Activated CD8-positive, alpha-beta T cell treated with anti-CD3 and anti-CD28 coated beads, Interleukin-2, amount 10 ng/mL, durations not matched to agents 7 days and 5 days (primary cell): ENCODE measurements at regions of chr11 and their contacts with region 1.

Region 1: DNA sequence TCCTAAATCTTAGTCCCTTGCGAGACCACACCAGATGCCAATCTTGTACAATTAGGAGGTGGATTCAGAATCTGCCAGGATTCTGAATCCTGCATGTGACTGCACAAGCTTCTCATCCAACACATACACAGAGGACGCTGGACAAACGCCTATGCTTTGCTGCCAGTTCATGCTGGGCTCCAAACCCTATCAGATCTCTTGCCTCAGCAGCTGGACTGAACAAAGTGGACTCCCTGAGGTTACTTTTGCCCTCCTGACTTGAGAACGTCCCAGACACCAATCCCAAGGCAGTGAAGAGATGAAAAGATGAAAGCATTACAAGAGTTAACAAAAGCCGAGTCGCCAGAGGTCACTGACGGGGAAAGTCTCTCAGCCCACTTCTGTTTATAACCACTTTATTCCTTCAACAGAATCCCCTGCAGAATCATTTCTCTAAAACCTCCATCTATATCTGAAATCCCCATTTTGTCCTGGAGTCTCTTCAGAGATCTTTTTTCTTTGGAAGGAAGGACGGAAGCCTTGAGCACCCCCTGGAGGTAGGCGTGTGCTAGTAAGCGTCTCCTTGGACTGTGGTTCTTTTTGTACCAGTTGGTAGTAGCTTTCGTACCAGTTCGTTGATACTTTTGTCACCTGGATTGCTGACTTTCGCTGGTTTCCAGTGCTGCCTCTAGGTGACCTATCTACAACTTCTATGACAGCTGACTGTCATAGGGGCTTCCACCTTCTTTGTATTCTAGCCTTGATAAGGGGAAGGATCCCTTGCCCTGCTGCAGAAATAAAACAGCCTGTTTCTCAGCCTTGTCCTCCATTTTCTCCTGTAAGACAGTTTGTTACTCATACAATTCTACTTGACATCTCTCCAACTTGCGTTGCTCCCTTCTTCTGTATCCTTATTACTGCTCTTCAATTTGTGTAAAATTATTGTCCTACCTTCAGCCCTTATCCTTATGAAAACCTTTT is 26.1 kb upstream of the EED start:
- DNase-seq: peak; percentile 70
- ATAC-seq: peak; percentile 89
- H3K4me3 Mint-ChIP-seq: peak overlapping the region; percentile 26
- H3K27ac Mint-ChIP-seq: no peak overlapping the region
- H3K4me1 Mint-ChIP-seq: peaks cover 25% of the 10 kb centered on the region
- H3K27me3 Mint-ChIP-seq: peaks cover 4% of the 10 kb centered on the region

Region 2: DNA sequence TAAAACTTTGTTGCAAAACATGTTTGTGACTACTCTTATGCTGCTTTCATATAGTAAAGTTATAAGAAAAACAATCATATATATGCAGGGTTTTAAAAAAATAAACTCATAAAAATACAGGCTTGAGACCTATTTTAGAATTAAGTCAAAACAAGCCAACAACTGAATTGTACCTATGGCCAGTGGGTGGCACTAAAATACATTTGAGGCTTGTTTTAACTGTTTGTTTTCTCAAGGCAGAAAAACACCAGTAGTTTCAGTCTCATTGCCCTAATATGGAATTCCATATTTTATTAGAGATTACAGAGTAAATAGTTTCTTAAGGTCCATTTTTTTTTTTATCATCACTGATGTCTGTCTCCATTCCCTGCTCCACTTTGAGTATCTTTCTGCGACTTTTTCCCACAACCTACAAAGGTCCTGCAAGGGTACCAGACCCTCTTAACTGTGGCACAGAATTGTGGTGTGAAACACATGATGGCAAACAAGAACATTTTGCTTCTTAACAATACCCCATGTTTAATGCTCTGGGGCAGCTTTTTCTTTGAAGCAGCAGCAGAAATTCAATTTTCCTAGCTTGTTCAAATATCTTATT is 523.9 kb before region 1 on chr11:
- CTCF ChIA-PET with region 1: no interaction called
- POLR2A ChIA-PET with region 1: no interaction called
- DNase-seq: peak; percentile 48
- ATAC-seq: no peak
- H3K4me3 Mint-ChIP-seq: no peak overlapping the region
- H3K27ac Mint-ChIP-seq: no peak overlapping the region
- H3K4me1 Mint-ChIP-seq: peaks cover 43% of the 10 kb centered on the region
- H3K27me3 Mint-ChIP-seq: peaks cover 2% of the 10 kb centered on the region

Region 3: GRCh38 chr11:86041975-86042378 is 176.4 kb before region 1 on chr11:
- CTCF ChIA-PET with region 1: interaction called, 31 read pairs
- POLR2A ChIA-PET with region 1: no interaction called
- DNase-seq: peak; percentile 68
- ATAC-seq: peak; percentile 84
- H3K4me3 Mint-ChIP-seq: no peak overlapping the region
- H3K27ac Mint-ChIP-seq: no peak overlapping the region
- H3K4me1 Mint-ChIP-seq: peaks cover 52% of the 10 kb centered on the region
- H3K27me3 Mint-ChIP-seq: no peaks in the 10 kb centered on the region

Region 4: DNA sequence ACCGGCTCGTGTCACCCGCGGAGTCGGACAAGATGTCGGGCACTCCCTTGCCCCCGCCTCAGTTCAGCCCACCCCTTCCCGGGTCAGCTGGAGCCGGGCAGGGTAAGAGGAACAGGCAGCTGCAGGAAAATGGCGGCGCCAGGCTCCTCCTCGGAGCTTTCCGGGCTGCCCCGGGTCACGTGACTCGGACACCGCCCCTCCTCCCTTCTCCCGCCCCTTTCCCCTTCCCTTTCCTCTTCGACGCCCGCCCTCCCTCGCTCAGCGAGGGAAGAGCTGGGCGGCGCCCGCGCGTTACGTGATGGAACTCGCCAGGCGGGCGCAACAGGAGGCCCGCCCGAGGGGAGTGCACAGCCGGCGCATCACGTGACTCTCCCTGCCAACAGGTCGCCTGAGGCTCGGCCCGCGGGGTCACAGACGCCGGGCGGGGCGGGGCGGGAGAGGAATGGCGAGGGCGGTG is 149.4 kb before region 1 on chr11 and contains the start of gene PICALM:
- CTCF ChIA-PET with region 1: interaction called, 10 read pairs
- POLR2A ChIA-PET with region 1: interaction called, 6 read pairs
- DNase-seq: peak; percentile 98
- ATAC-seq: peak; percentile 92
- H3K4me3 Mint-ChIP-seq: peak within 1 kb of the TSS; percentile 98
- H3K27ac Mint-ChIP-seq: peak within 1 kb of the TSS; percentile 95
- H3K4me1 Mint-ChIP-seq: peaks cover 37% of the 10 kb centered on the region
- H3K27me3 Mint-ChIP-seq: no peaks in the 10 kb centered on the region
- total RNA-seq, gene PICALM: 110 to 115 TPM

Region 5: DNA sequence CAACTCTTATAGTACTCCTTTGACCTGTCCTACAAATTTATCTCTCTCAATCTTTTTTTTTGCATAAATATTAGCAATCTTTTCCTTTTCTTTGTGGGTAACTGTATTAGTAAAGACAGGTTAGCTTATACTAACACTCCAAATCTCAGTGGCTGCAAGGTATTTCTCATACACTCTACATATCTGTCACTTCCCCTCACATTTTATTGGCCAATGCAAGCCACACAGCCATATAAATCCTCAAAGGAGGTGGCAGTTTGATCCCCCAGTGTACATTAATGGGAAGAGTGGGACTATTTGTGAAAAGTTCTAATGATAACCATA is 16.4 kb before region 1 on chr11:
- CTCF ChIA-PET with region 1: interaction called, 21 read pairs
- POLR2A ChIA-PET with region 1: interaction called, 3 read pairs
- DNase-seq: no peak
- ATAC-seq: peak; percentile 70
- H3K4me3 Mint-ChIP-seq: no peak overlapping the region
- H3K27ac Mint-ChIP-seq: no peak overlapping the region
- H3K4me1 Mint-ChIP-seq: no peaks in the 10 kb centered on the region
- H3K27me3 Mint-ChIP-seq: peaks cover under 1% of the 10 kb centered on the region

Region 6: DNA sequence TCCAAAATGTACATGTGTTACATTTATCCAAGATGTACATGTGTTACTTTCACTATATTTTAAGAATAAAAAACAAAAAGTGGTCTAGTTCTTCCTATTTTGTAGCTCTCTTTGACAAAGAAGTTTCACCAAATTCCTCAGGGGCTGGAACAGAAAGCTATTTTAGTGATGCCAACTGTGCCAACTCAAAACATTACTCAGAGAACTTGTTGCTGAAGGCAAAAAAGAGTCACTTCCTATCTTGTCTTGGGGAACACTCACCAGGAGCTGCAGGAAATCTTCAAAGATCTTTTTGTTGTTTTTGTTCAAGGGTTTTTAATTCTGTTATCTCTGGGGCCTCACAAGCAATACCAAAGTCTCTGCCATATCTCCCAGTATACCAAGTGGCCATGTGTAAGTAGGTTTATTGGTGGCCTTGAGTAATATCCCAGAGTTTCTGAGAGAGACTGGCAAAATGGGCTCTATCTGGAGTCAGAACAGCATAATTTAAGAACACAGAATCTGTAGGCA is 12.6 kb after region 1 on chr11:
- CTCF ChIA-PET with region 1: interaction called, 10 read pairs
- POLR2A ChIA-PET with region 1: interaction called, 3 read pairs
- DNase-seq: no peak
- ATAC-seq: no peak
- H3K4me3 Mint-ChIP-seq: no peak overlapping the region
- H3K27ac Mint-ChIP-seq: no peak overlapping the region
- H3K4me1 Mint-ChIP-seq: peaks cover 13% of the 10 kb centered on the region
- H3K27me3 Mint-ChIP-seq: no peaks in the 10 kb centered on the region

Region 7: GRCh38 chr11:86244522-86245368 is 26.3 kb after region 1 on chr11 and contains the start of gene EED:
- CTCF ChIA-PET with region 1: interaction called, 17 read pairs
- POLR2A ChIA-PET with region 1: no interaction called
- DNase-seq: peak; percentile 95
- ATAC-seq: peak; percentile 84
- H3K4me3 Mint-ChIP-seq: no peak within 1 kb of the TSS
- H3K27ac Mint-ChIP-seq: no peak within 1 kb of the TSS
- H3K4me1 Mint-ChIP-seq: peaks cover 38% of the 10 kb centered on the region
- H3K27me3 Mint-ChIP-seq: no peaks in the 10 kb centered on the region
- total RNA-seq, gene EED: 44.8 to 48.3 TPM

Region 8: GRCh38 chr11:86251345-86251744 is 32.9 kb after region 1 on chr11:
- CTCF ChIA-PET with region 1: interaction called, 10 read pairs
- POLR2A ChIA-PET with region 1: no interaction called
- DNase-seq: no peak
- ATAC-seq: no peak
- H3K4me3 Mint-ChIP-seq: peak overlapping the region; percentile 18
- H3K27ac Mint-ChIP-seq: no peak overlapping the region
- H3K4me1 Mint-ChIP-seq: peaks cover 57% of the 10 kb centered on the region
- H3K27me3 Mint-ChIP-seq: no peaks in the 10 kb centered on the region